T-cell (primary cell): ENCODE measurements at regions of chr6 and their contacts with region 1.

Region 1: GRCh38 chr6:85482905-85483700 is 33.2 kb downstream of the NT5E start:
- DNase-seq: peak; percentile 37 to 85 (median 68)
- ATAC-seq: peak; percentile 74 to 89 (median 86)
- H3K4me3 ChIP-seq: no peak overlapping the region
- H3K4me3 Mint-ChIP-seq: no peak overlapping the region
- H3K27ac ChIP-seq: no peak overlapping the region
- H3K27ac Mint-ChIP-seq: no peak overlapping the region
- H3K4me1 ChIP-seq: peaks cover 0 to 5% of the 10 kb centered on the region in 2 experiments
- H3K4me1 Mint-ChIP-seq: peaks cover 6 to 13% (median 10%) of the 10 kb centered on the region in 3 donors
- H3K27me3 ChIP-seq: peaks cover 0 to 3% of the 10 kb centered on the region in 2 experiments
- H3K27me3 Mint-ChIP-seq: peaks cover 0 to 10% of the 10 kb centered on the region in 2 donors

Region 2: DNA sequence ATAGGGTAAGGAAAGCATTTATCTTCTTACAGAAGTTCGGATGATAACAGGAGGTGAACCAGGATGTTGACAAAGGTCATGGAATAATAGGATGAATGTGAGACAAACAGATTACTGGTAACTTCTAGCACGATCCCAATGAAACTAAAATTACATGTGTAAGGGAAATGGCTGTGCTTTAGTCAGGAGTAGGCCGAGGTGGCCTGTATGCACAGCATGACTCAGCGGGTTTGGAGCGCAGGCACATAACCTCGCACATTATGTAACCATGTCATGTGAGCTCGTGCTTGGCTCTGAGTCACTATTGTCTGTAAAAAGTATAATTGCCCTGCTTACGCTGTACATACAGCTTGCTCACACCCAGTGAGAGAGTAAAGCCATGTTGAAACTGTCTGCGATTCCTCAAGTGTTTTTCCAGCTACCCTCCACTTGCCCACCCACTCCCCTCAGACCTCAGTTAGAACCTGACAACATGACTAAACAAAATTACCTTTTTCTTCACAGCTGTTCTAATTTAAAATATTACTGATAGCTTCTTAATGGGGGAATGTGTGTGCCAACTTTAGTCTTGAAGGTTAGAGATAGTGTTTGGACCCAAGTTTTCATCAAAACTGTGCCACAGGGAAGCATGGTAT is 1615.5 kb before region 1 on chr6:
- CTCF ChIA-PET with region 1: no interaction called
- POLR2A ChIA-PET with region 1: no interaction called
- DNase-seq: peak in 11 of 35 experiments; percentile 5 to 38 (median 13)
- ATAC-seq: no peak
- H3K4me3 ChIP-seq: no peak overlapping the region
- H3K4me3 Mint-ChIP-seq: no peak overlapping the region
- H3K27ac ChIP-seq: no peak overlapping the region
- H3K27ac Mint-ChIP-seq: no peak overlapping the region
- H3K4me1 ChIP-seq: no peaks in the 10 kb centered on the region
- H3K4me1 Mint-ChIP-seq: peaks cover 23 to 34% (median 27%) of the 10 kb centered on the region in 3 donors
- H3K27me3 ChIP-seq: no peaks in the 10 kb centered on the region
- H3K27me3 Mint-ChIP-seq: no peaks in the 10 kb centered on the region

Region 3: GRCh38 chr6:85354761-85355618 is 128.1 kb before region 1 on chr6:
- CTCF ChIA-PET with region 1: interaction called, 27 to 62 read pairs
- POLR2A ChIA-PET with region 1: no interaction called
- DNase-seq: peak in 34 of 35 experiments; percentile 1 to 66 (median 40)
- ATAC-seq: peak; percentile 59 to 74 (median 66)
- H3K4me3 ChIP-seq: no peak overlapping the region
- H3K4me3 Mint-ChIP-seq: no peak overlapping the region
- H3K27ac ChIP-seq: no peak overlapping the region
- H3K27ac Mint-ChIP-seq: no peak overlapping the region
- H3K4me1 ChIP-seq: no peaks in the 10 kb centered on the region
- H3K4me1 Mint-ChIP-seq: no peaks in the 10 kb centered on the region
- H3K27me3 ChIP-seq: no peaks in the 10 kb centered on the region
- H3K27me3 Mint-ChIP-seq: no peaks in the 10 kb centered on the region

Region 4: GRCh38 chr6:85360794-85361642 is 122.1 kb before region 1 on chr6:
- CTCF ChIA-PET with region 1: interaction called, 27 to 62 read pairs
- POLR2A ChIA-PET with region 1: no interaction called
- DNase-seq: no peak
- ATAC-seq: no peak
- H3K4me3 ChIP-seq: no peak overlapping the region
- H3K4me3 Mint-ChIP-seq: no peak overlapping the region
- H3K27ac ChIP-seq: no peak overlapping the region
- H3K27ac Mint-ChIP-seq: no peak overlapping the region
- H3K4me1 ChIP-seq: no peaks in the 10 kb centered on the region
- H3K4me1 Mint-ChIP-seq: no peaks in the 10 kb centered on the region
- H3K27me3 ChIP-seq: no peaks in the 10 kb centered on the region
- H3K27me3 Mint-ChIP-seq: no peaks in the 10 kb centered on the region

Region 5: GRCh38 chr6:85498596-85499258 is 15.6 kb after region 1 on chr6:
- CTCF ChIA-PET with region 1: interaction called, 11 to 15 read pairs
- POLR2A ChIA-PET with region 1: no interaction called
- DNase-seq: peak in 1 of 35 experiments; percentile 14
- ATAC-seq: peak in 1 of 4 experiments; percentile 46
- H3K4me3 ChIP-seq: no peak overlapping the region
- H3K4me3 Mint-ChIP-seq: no peak overlapping the region
- H3K27ac ChIP-seq: no peak overlapping the region
- H3K27ac Mint-ChIP-seq: no peak overlapping the region
- H3K4me1 ChIP-seq: no peaks in the 10 kb centered on the region
- H3K4me1 Mint-ChIP-seq: peaks cover 9 to 20% (median 15%) of the 10 kb centered on the region in 3 donors
- H3K27me3 ChIP-seq: no peaks in the 10 kb centered on the region
- H3K27me3 Mint-ChIP-seq: no peaks in the 10 kb centered on the region

Region 6: DNA sequence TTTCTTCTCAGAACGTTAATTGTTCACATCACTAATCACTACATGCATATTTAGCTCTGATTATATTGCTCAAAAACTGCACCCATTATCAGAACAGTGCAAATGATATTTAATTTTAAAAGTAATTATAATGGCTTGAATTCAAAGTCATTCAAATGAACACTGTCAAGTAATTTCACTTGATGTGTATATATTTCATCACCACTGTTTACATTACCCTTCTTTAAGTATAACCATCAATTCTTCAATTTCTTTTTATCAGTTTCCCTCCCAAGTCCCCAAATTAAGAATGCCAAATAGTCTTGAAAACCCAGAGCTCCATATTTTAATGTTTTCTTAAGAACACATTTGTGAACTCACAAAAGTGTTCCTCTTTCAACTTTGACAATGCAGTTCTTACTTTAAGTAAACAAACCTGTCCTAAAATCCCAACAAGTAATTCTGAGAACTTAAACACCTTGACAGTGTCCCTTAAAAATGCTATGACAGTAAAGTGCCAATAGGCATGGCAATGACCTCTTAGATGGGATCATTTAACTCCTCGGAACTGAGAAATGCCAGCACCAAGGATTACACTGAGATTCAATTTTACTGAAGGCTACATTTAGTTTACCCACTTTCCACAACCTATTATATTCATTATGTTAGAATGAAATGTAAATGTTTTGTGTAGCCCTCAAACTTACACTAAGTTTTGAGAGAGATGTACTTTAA is 127.2 kb after region 1 on chr6:
- CTCF ChIA-PET with region 1: no interaction called
- POLR2A ChIA-PET with region 1: no interaction called
- DNase-seq: no peak
- ATAC-seq: no peak
- H3K4me3 ChIP-seq: no peak overlapping the region
- H3K4me3 Mint-ChIP-seq: no peak overlapping the region
- H3K27ac ChIP-seq: no peak overlapping the region
- H3K27ac Mint-ChIP-seq: peak overlapping the region in 1 of 2 donors; percentile 69
- H3K4me1 ChIP-seq: no peaks in the 10 kb centered on the region
- H3K4me1 Mint-ChIP-seq: peaks cover 5 to 9% (median 7%) of the 10 kb centered on the region in 3 donors
- H3K27me3 ChIP-seq: no peaks in the 10 kb centered on the region
- H3K27me3 Mint-ChIP-seq: no peaks in the 10 kb centered on the region